ENCODE measurements at regions of chr7 and their contacts with region 1.

Region 1: DNA sequence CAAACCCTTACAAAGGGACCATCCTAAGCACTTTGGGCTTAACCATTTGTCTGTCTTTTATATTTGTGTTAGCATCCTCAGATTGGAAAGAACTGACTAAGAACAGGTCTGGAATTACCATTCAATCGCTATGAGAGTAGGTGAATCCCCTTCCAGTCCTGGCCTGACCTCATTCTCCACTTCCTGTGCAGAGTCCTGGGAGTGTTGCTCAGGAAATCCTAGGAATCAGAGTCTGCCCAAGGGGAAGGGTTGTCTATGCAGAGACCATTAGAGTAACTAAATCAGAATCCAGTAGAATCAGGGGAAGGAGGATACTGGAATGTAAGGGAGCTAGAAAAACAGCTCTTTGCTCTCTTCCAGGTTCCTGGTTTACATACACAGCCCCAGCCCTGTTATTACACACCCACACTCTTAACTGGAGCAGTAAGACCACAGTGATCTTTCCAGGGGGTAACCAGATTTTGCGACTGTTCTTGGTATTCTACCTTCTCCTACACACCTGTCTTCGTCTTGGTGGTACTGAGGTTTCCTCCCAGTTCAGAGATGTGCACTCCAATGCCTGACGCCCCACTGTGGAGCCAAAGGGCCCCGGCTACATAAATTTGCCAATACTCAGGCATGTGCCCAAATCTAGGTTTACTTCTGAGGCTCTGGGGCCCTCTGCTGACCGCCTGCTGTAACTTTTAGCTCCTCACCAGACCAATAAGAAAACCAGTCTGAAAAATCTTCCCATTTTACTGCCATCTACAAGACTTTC is 103.7 kb downstream of the RNF216 start:
- DNase-seq: peak; percentile 62 to 69
- H3K4me3 ChIP-seq: no peak overlapping the region
- H3K27ac ChIP-seq: no peak overlapping the region
- H3K4me1 ChIP-seq: no peaks in the 10 kb centered on the region
- H3K27me3 ChIP-seq: no peaks in the 10 kb centered on the region
- CTCF ChIP-seq: peak; percentile 87

Region 2: GRCh38 chr7:5243261-5243660 is 434.5 kb before region 1 on chr7:
- CTCF ChIA-PET with region 1: interaction called, 5 read pairs
- POLR2A ChIA-PET with region 1: no interaction called
- intact Hi-C with region 1: loop called (anchors 5 kb)
- DNase-seq: no peak
- H3K4me3 ChIP-seq: no peak overlapping the region
- H3K27ac ChIP-seq: no peak overlapping the region
- H3K4me1 ChIP-seq: peaks cover 17% of the 10 kb centered on the region
- H3K27me3 ChIP-seq: no peaks in the 10 kb centered on the region
- CTCF ChIP-seq: no peak

Region 3: GRCh38 chr7:5494683-5495561 is 182.8 kb before region 1 on chr7:
- CTCF ChIA-PET with region 1: interaction called, 15 read pairs
- POLR2A ChIA-PET with region 1: no interaction called
- intact Hi-C with region 1: loop called (anchors 1 kb)
- DNase-seq: peak; percentile 84 to 95
- H3K4me3 ChIP-seq: peak overlapping the region; percentile 22; the same call in 1 of the 2 replicates
- H3K27ac ChIP-seq: peak overlapping the region; percentile 63
- H3K4me1 ChIP-seq: peaks cover 19% of the 10 kb centered on the region
- H3K27me3 ChIP-seq: no peaks in the 10 kb centered on the region
- CTCF ChIP-seq: peak; percentile 98

Region 4: GRCh38 chr7:5689716-5690115 is 12.0 kb after region 1 on chr7:
- CTCF ChIA-PET with region 1: interaction called, 12 read pairs
- POLR2A ChIA-PET with region 1: interaction called, 4 read pairs
- intact Hi-C with region 1: no loop called
- DNase-seq: no peak
- H3K4me3 ChIP-seq: no peak overlapping the region
- H3K27ac ChIP-seq: no peak overlapping the region
- H3K4me1 ChIP-seq: peaks cover 50% of the 10 kb centered on the region
- H3K27me3 ChIP-seq: no peaks in the 10 kb centered on the region
- CTCF ChIP-seq: no peak

Region 5: GRCh38 chr7:6589829-6590644 is 912.3 kb after region 1 on chr7 and contains the start of gene INTS15:
- CTCF ChIA-PET with region 1: no interaction called
- POLR2A ChIA-PET with region 1: no interaction called
- intact Hi-C with region 1: no loop called
- DNase-seq: peak; percentile 52 to 90
- H3K4me3 ChIP-seq: peak within 1 kb of the TSS; percentile 92
- H3K27ac ChIP-seq: no peak within 1 kb of the TSS
- H3K4me1 ChIP-seq: peaks cover 13% of the 10 kb centered on the region
- H3K27me3 ChIP-seq: no peaks in the 10 kb centered on the region
- CTCF ChIP-seq: no peak; the same call in 1 of the 2 replicates
- total RNA-seq, gene INTS15: 21.4 and 28.7 TPM in 2 replicates

Measured in PC-9 (cell line).